ENCODE measurements at regions of chr12 and their contacts with region 1.

Region 1: GRCh38 chr12:96489103-96490056 is at the start of gene CFAP54:
- DNase-seq: peak; percentile 73
- H3K4me3 ChIP-seq: peak within 1 kb of the TSS; percentile 81
- H3K27ac ChIP-seq: peak within 1 kb of the TSS; percentile 81
- H3K27me3 ChIP-seq: no peaks in the 10 kb centered on the region
- CTCF ChIP-seq: peak; percentile 90
- polyA plus RNA-seq, gene CFAP54: 0.82 and 1.2 TPM in 2 replicates

Region 2: DNA sequence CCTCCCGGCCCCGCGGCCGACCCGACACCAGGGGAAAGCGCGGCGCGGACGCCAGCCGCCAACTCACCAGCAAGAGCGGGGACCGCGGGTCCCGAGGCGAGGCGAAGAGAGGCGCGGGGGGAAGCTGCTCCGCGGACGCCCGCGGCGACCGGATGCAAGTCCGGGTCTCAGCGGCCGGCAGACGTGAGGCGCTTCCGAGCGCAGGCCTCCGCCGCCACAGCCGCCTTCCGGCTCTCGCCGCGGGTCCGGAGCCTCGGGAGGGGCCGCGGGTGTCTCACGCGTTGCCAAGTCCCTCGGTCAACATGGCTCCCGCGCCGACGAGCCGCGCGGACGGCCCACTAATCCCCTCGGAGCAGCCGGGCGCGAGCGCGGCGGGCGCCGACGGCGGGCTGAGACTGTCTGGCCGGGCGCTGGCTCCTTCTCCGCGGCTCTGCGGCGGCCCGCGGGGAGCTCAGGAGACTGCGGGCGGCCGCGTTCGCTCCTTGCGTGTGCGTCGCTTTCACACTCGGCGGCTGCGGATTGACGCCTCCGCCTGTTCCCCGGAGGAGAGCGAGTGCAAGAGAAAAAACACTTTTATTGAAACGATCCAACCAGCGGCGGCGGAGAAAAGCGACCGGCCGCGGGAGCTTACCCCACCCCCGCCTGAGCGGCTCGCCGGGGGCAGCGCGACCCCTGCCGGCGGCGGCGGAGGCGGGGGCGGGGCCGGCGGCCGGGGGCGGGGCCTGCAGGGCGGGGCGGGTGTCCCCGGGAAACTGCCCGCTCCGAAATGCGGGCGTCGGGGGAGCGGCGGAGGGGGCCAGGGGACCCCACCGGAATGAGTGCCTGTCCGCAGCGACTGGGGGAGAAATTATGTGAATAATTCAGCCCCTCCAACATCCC is 89.2 kb before region 1 on chr12 and contains the start of gene CDK17:
- CTCF ChIA-PET with region 1: interaction called, 34 read pairs
- POLR2A ChIA-PET with region 1: interaction called, 3 read pairs
- DNase-seq: peak; percentile 69
- H3K4me3 ChIP-seq: peak within 1 kb of the TSS; percentile 94
- H3K27ac ChIP-seq: peak within 1 kb of the TSS; percentile 93
- H3K27me3 ChIP-seq: no peaks in the 10 kb centered on the region
- CTCF ChIP-seq: peak; percentile 40
- polyA plus RNA-seq, gene CDK17: 50.2 and 67.8 TPM in 2 replicates

Region 3: GRCh38 chr12:96445691-96446583 is 43.4 kb before region 1 on chr12:
- CTCF ChIA-PET with region 1: interaction called, 10 read pairs
- POLR2A ChIA-PET with region 1: no interaction called
- DNase-seq: peak; percentile 79
- H3K4me3 ChIP-seq: peak overlapping the region; percentile 23
- H3K27ac ChIP-seq: peak overlapping the region; percentile 92
- H3K27me3 ChIP-seq: no peaks in the 10 kb centered on the region
- CTCF ChIP-seq: no peak

Region 4: GRCh38 chr12:96456265-96456974 is 33.0 kb before region 1 on chr12:
- CTCF ChIA-PET with region 1: interaction called, 12 read pairs
- POLR2A ChIA-PET with region 1: interaction called, 3 read pairs
- DNase-seq: no peak
- H3K4me3 ChIP-seq: no peak overlapping the region
- H3K27ac ChIP-seq: no peak overlapping the region
- H3K27me3 ChIP-seq: no peaks in the 10 kb centered on the region
- CTCF ChIP-seq: no peak

Region 5: DNA sequence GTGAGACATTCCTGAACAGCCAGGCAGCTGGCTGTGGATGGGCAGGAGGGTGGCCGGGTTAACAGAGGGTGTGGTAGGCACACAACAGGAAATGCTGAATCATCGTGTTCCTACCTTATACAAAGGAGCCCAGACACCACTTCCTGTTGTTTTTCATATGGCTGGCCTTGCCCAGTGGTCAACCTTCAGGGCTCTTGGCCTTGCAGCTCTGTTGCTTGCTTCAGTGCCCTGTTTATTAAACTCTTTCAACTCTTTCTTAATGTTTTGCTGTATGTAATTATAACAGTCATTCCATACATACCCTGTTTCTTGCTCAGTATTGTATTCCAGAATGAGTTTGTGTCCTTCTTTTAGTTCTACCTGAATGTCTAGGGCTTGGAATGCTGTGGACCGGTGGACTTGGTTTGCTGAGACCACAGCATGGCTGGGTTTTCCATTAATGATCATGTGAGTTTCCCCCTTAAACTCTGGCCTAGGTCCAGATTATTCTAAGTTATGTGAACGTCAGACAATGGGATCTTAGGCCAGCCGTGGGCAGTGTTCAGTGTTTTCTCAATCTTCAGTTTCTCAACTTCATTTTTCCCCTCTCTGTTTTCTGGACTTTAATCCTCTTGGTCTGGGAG is 11.9 kb after region 1 on chr12:
- CTCF ChIA-PET with region 1: interaction called, 29 read pairs
- POLR2A ChIA-PET with region 1: no interaction called
- DNase-seq: no peak
- H3K4me3 ChIP-seq: no peak overlapping the region
- H3K27ac ChIP-seq: peak overlapping the region; percentile 79
- H3K27me3 ChIP-seq: no peaks in the 10 kb centered on the region
- CTCF ChIP-seq: no peak

Region 6: GRCh38 chr12:97493731-97494130 is 1004.4 kb after region 1 on chr12:
- CTCF ChIA-PET with region 1: no interaction called
- POLR2A ChIA-PET with region 1: no interaction called
- DNase-seq: no peak
- H3K4me3 ChIP-seq: no peak overlapping the region
- H3K27ac ChIP-seq: no peak overlapping the region
- H3K27me3 ChIP-seq: no peaks in the 10 kb centered on the region
- CTCF ChIP-seq: no peak

Measured in AG04450 (cell line).